ENCODE measurements at regions of chr7 and their contacts with region 1.

Region 1: DNA sequence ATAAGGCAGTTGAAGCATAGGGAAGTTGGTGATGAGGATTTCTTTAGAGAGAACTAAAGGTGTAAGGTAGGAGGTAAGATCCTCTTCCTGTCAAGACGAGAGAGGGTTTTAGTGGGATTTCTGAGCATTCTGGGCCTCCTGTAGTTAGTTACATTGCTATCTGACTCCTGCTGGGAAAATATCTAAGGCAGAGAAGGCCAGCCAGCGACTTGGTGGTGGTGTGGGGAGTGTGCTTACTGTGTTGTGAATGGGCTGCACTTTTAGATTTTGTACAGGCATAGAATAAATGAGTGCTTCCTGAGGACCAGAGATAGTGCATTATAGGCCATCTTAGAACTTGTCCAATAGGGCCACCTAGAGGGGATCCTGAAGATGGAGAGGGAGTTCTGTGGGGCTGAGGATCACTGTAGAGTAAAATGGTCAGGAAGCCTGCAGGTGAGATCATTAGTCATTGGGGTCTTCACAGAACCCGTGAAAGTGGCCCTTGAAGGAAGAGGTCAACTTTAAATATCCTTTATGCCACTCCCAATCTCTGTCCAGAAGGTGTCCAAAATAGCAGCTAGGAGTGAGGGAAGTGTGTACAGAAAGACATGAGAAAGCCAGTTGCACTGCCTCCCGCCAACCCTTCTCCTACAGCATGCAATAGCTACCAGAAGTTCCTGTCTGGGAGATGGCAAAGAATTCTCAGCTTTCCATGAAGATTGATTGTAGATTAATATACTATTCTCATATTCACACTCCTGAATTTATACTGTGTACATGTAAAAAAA is 266.6 kb downstream of the POLR1F start:
- ATAC-seq: peak in 3 of 8 experiments; percentile 99
- H3K4me3 ChIP-seq: no peak overlapping the region
- H3K27ac ChIP-seq: no peak overlapping the region
- H3K4me1 ChIP-seq: no peaks in the 10 kb centered on the region

Region 2: DNA sequence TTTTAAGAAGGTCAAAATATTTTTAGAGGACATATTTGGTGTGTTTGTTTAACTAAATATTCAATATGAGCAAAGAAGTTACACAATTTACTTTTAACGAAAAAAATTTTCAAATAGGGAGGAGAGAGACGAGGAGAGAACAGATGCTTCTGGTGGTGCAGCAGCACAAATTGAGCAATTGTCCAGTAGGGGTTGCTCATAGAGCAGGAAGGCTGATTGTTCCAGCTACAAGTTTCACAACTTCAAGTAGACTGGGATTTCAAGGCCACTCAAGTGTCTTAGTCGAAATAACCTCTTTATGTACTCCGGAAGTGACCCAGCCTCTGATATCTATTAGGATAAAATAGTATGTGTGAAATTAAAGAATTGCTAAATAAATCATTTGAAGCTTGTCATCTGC is 748.8 kb before region 1 on chr7:
- in situ Hi-C with region 1: loop called in 1 of 9 experiments (anchors 25 kb)
- ATAC-seq: peak in 4 of 8 experiments; percentile 53 to 100 (median 97)
- H3K4me3 ChIP-seq: no peak overlapping the region
- H3K27ac ChIP-seq: no peak overlapping the region
- H3K4me1 ChIP-seq: peaks cover 0 to 8% of the 10 kb centered on the region in 2 donors

Region 3: DNA sequence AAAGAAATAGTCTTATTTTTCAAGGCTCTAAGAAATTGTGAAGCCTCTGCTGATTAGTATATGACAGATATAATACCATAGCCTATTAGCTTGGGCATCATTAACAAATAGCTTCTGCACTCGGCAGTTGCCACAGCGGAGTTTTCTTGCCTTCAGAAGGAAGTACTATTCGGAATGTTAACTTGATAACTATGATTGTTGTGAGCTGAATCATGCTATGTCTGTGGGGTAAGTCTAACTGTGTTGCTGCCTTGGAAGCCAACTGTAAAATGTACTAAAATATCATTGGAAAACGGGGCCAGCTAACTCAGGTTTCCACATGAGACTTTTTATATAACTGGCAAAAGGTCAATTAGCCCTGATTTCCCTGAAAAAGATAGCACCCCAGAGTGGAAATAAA is 417.9 kb before region 1 on chr7:
- in situ Hi-C with region 1: no loop called
- ATAC-seq: no peak
- H3K4me3 ChIP-seq: no peak overlapping the region
- H3K27ac ChIP-seq: no peak overlapping the region
- H3K4me1 ChIP-seq: no peaks in the 10 kb centered on the region

Region 4: DNA sequence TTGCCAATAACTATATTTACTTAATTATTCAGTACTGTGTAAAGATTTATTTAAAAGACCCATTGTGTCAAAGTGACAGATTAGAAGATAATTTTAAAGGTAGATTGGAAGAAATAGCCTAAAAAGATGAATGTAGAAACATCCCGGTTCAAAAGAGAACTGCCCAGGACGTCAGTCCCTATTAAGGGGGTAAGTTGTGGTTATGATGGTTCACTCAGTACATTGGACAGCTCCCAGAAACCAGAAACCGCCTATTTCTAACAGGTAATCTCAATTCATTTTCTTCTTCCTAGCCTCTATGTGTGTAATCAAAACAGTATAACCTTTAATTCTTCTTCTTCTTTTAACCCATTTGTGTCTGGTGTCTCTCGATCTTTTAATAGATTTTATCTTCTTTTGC is 295.5 kb before region 1 on chr7:
- in situ Hi-C with region 1: loop called in 1 of 9 experiments (anchors 25 kb)
- ATAC-seq: peak in 1 of 8 experiments; percentile 25
- H3K4me3 ChIP-seq: no peak overlapping the region
- H3K27ac ChIP-seq: no peak overlapping the region
- H3K4me1 ChIP-seq: no peaks in the 10 kb centered on the region

Region 5: DNA sequence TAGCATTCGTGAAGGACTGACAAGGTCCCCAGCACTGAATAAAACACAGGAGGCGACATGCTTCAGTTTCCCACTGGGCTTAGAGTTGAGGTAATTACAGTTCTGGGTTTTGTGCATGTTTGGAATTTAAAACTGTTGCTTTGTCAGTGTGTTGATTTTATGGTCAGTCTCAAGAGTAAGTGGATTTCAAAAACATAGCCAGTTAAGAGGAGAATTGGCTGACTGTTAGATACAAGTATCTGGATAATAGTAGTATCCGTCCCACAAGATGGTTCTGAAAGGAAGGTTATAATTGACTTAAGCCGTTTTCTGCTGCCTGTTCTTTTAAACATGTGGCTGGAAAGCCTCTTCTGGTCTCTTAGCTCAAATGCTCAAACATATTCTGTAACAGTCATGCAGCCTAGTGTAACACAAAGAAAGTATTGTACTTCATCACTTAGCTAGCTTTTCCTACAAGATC is 95.8 kb after region 1 on chr7:
- in situ Hi-C with region 1: no loop called
- ATAC-seq: peak; percentile 27 to 61 (median 51)
- H3K4me3 ChIP-seq: no peak overlapping the region
- H3K27ac ChIP-seq: no peak overlapping the region
- H3K4me1 ChIP-seq: peaks cover 0 to 2% of the 10 kb centered on the region in 2 donors

Region 6: GRCh38 chr7:19665399-19666008 is 223.3 kb after region 1 on chr7:
- in situ Hi-C with region 1: loop called in 1 of 9 experiments (anchors 25 kb)
- ATAC-seq: peak in 2 of 8 experiments; percentile 33 to 36
- H3K4me3 ChIP-seq: no peak overlapping the region
- H3K27ac ChIP-seq: no peak overlapping the region
- H3K4me1 ChIP-seq: no peaks in the 10 kb centered on the region

Measured in motor neuron (in vitro differentiated cells).